ENCODE measurements at regions of chr20 and their contacts with region 1.

Region 1: GRCh38 chr20:49739042-49739441 is 25.4 kb upstream of the B4GALT5 start:
- DNase-seq: no peak
- H3K4me3 ChIP-seq: no peak overlapping the region
- H3K4me3 Mint-ChIP-seq: no peak overlapping the region
- H3K27ac Mint-ChIP-seq: no peak overlapping the region
- H3K4me1 ChIP-seq: peaks cover 9% of the 10 kb centered on the region
- H3K4me1 Mint-ChIP-seq: peaks cover 6% of the 10 kb centered on the region
- H3K27me3 ChIP-seq: no peaks in the 10 kb centered on the region
- H3K27me3 Mint-ChIP-seq: no peaks in the 10 kb centered on the region
- CTCF ChIP-seq: no peak

Region 2: DNA sequence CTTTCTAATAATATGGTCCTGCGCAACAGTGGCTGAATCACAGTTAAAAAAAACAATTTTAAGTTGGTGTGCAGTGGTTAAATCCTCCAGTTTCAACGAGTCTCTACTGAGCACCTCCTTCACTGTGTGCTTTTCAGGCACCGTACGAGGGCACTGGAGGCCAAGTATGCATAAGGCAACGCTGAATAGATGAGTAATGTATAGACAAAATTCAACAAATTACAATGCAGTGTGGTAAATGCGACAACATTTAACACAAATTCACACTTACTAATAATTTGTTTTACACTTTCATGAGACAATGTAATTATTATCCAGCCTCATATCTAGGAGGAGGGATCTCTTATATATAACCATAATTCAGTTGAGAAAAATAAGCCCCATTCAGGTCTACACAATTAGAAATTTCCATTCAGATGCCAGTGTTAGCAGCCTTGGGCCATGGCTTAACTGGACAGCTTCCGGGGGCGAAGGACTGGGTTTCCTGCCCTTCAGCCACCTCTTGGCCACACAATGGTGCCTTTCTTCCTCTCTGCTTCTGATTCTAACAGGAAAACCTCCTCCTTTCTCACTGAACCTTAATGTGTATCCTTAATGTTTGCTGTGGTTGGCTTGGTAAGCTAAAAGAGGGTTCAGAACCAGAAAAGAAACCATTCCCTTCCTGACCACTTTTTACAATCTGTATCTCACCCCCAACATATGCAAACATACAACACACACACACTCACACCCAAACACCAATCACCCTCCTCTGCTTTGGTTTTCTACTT is 77.3 kb before region 1 on chr20:
- CTCF ChIA-PET with region 1: no interaction called
- POLR2A ChIA-PET with region 1: no interaction called
- intact Hi-C with region 1: no loop called
- DNase-seq: no peak
- H3K4me3 ChIP-seq: no peak overlapping the region
- H3K4me3 Mint-ChIP-seq: no peak overlapping the region
- H3K27ac Mint-ChIP-seq: no peak overlapping the region
- H3K4me1 ChIP-seq: peaks cover 6% of the 10 kb centered on the region
- H3K4me1 Mint-ChIP-seq: peaks cover 17% of the 10 kb centered on the region
- H3K27me3 ChIP-seq: no peaks in the 10 kb centered on the region
- H3K27me3 Mint-ChIP-seq: no peaks in the 10 kb centered on the region
- CTCF ChIP-seq: no peak

Region 3: GRCh38 chr20:49749625-49750024 is 10.6 kb after region 1 on chr20:
- CTCF ChIA-PET with region 1: interaction called, 10 read pairs
- POLR2A ChIA-PET with region 1: no interaction called
- intact Hi-C with region 1: no loop called
- DNase-seq: no peak
- H3K4me3 ChIP-seq: no peak overlapping the region
- H3K4me3 Mint-ChIP-seq: no peak overlapping the region
- H3K27ac Mint-ChIP-seq: no peak overlapping the region
- H3K4me1 ChIP-seq: peaks cover 9% of the 10 kb centered on the region
- H3K4me1 Mint-ChIP-seq: peaks cover 10% of the 10 kb centered on the region
- H3K27me3 ChIP-seq: no peaks in the 10 kb centered on the region
- H3K27me3 Mint-ChIP-seq: no peaks in the 10 kb centered on the region
- CTCF ChIP-seq: no peak

Measured in Caco-2 (cell line).